ENCODE measurements at regions of chr1 and their contacts with region 1.

Region 1: GRCh38 chr1:91924146-91924545 is 25.1 kb upstream of the BRDT start:
- DNase-seq: peak; percentile 56
- H3K4me3 ChIP-seq: no peak overlapping the region
- H3K27ac ChIP-seq: no peak overlapping the region
- H3K4me1 ChIP-seq: no peaks in the 10 kb centered on the region
- H3K27me3 ChIP-seq: no peaks in the 10 kb centered on the region
- CTCF ChIP-seq: no peak

Region 2: GRCh38 chr1:91282695-91283420 is 641.3 kb before region 1 on chr1:
- CTCF ChIA-PET with region 1: no interaction called
- dilution Hi-C with region 1: no loop called
- in situ Hi-C with region 1: no loop called
- intact Hi-C with region 1: loop called (anchors 1 kb)
- DNase-seq: peak; percentile 34
- H3K4me3 ChIP-seq: no peak overlapping the region
- H3K27ac ChIP-seq: no peak overlapping the region
- H3K4me1 ChIP-seq: no peaks in the 10 kb centered on the region
- H3K27me3 ChIP-seq: no peaks in the 10 kb centered on the region
- CTCF ChIP-seq: peak; percentile 78

Region 3: GRCh38 chr1:91440845-91441244 is 483.3 kb before region 1 on chr1:
- CTCF ChIA-PET with region 1: no interaction called
- dilution Hi-C with region 1: no loop called
- in situ Hi-C with region 1: no loop called
- intact Hi-C with region 1: loop called (anchors 1 kb)
- DNase-seq: no peak
- H3K4me3 ChIP-seq: no peak overlapping the region
- H3K27ac ChIP-seq: no peak overlapping the region
- H3K4me1 ChIP-seq: no peaks in the 10 kb centered on the region
- H3K27me3 ChIP-seq: peaks cover 2% of the 10 kb centered on the region
- CTCF ChIP-seq: peak; percentile 27 to 35

Region 4: DNA sequence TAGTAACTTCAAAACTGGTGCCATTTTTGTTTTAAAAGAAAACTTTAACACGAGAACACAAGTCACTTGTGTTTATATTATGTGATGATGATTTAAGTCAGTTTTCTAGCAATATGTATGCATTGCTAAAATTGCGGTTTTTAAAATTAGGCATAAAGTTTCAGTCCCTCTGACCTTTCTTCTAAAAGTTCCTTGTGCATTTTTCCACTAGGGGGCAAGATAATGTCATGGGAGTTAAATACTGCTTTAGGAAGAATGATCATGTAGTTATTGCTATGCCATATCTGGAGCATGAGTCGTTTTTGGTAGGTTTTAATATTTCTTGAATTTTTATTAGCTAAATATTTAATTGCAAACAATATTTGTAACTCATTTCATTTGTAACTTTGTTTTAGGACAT is 412.8 kb before region 1 on chr1:
- CTCF ChIA-PET with region 1: no interaction called
- dilution Hi-C with region 1: no loop called
- in situ Hi-C with region 1: no loop called
- intact Hi-C with region 1: loop called (anchors 1 kb)
- DNase-seq: peak; percentile 10
- H3K4me3 ChIP-seq: no peak overlapping the region
- H3K27ac ChIP-seq: no peak overlapping the region
- H3K4me1 ChIP-seq: no peaks in the 10 kb centered on the region
- H3K27me3 ChIP-seq: no peaks in the 10 kb centered on the region
- CTCF ChIP-seq: peak; percentile 49 to 60

Region 5: DNA sequence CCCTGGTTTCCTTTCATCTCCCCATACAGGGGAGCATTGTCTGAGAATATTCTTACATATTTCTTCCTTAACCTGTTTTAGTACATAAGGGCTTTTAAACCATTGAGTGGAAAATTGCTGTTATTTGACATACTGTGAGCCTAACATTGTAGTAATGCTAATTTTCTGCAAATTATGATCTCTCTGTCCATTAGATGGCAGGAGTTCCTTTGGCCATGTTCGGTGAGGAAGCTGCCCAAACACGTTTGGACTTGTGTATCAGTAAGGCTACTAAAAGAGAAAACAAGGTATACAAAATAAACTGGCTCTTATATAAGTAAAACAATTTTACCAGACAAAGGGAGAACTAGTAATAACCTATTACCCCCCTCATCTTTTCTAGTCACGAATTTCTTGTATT is 394.3 kb before region 1 on chr1:
- CTCF ChIA-PET with region 1: no interaction called
- dilution Hi-C with region 1: no loop called
- in situ Hi-C with region 1: loop called in 1 of 2 experiments (anchors 5 kb)
- intact Hi-C with region 1: loop called (anchors 1 kb)
- DNase-seq: peak; percentile 54
- H3K4me3 ChIP-seq: no peak overlapping the region
- H3K27ac ChIP-seq: no peak overlapping the region
- H3K4me1 ChIP-seq: peaks cover 9% of the 10 kb centered on the region
- H3K27me3 ChIP-seq: no peaks in the 10 kb centered on the region
- CTCF ChIP-seq: peak; percentile 56 to 71

Region 6: GRCh38 chr1:91846007-91846617 is 78.0 kb before region 1 on chr1:
- CTCF ChIA-PET with region 1: no interaction called
- dilution Hi-C with region 1: no loop called
- in situ Hi-C with region 1: no loop called
- intact Hi-C with region 1: loop called (anchors 10 kb)
- DNase-seq: no peak
- H3K4me3 ChIP-seq: no peak overlapping the region
- H3K27ac ChIP-seq: no peak overlapping the region
- H3K4me1 ChIP-seq: peaks cover 19% of the 10 kb centered on the region
- H3K27me3 ChIP-seq: no peaks in the 10 kb centered on the region
- CTCF ChIP-seq: no peak

Region 7: GRCh38 chr1:92118826-92119225 is 194.7 kb after region 1 on chr1:
- CTCF ChIA-PET with region 1: no interaction called
- dilution Hi-C with region 1: no loop called
- in situ Hi-C with region 1: no loop called
- intact Hi-C with region 1: no loop called
- DNase-seq: peak; percentile 59
- H3K4me3 ChIP-seq: no peak overlapping the region
- H3K27ac ChIP-seq: no peak overlapping the region
- H3K4me1 ChIP-seq: no peaks in the 10 kb centered on the region
- H3K27me3 ChIP-seq: no peaks in the 10 kb centered on the region
- CTCF ChIP-seq: no peak